CD8-positive, alpha-beta T cell (primary cell): ENCODE measurements at regions of chr19 and their contacts with region 1.

Region 1: GRCh38 chr19:15323496-15324227 is 8.7 kb downstream of the BRD4 start:
- DNase-seq: no peak
- ATAC-seq: no peak
- H3K4me3 ChIP-seq: no peak overlapping the region
- H3K4me3 Mint-ChIP-seq: peak overlapping the region; percentile 16
- H3K27ac ChIP-seq: peak overlapping the region in 1 of 2 experiments; percentile 28
- H3K27ac Mint-ChIP-seq: peak overlapping the region; percentile 7
- H3K4me1 ChIP-seq: peaks cover 84% of the 10 kb centered on the region
- H3K4me1 Mint-ChIP-seq: peaks cover 90% of the 10 kb centered on the region
- H3K27me3 ChIP-seq: no peaks in the 10 kb centered on the region
- H3K27me3 Mint-ChIP-seq: no peaks in the 10 kb centered on the region
- CTCF ChIP-seq: no peak

Region 2: GRCh38 chr19:15264061-15264932 is 59.4 kb before region 1 on chr19:
- CTCF ChIA-PET with region 1: interaction called, 4 read pairs
- POLR2A ChIA-PET with region 1: no interaction called
- intact Hi-C with region 1: loop called (anchors 2 kb)
- DNase-seq: peak; percentile 46 to 82 (median 72)
- ATAC-seq: peak; percentile 71
- H3K4me3 ChIP-seq: no peak overlapping the region
- H3K4me3 Mint-ChIP-seq: no peak overlapping the region
- H3K27ac ChIP-seq: no peak overlapping the region
- H3K27ac Mint-ChIP-seq: no peak overlapping the region
- H3K4me1 ChIP-seq: no peaks in the 10 kb centered on the region
- H3K4me1 Mint-ChIP-seq: peaks cover 3% of the 10 kb centered on the region
- H3K27me3 ChIP-seq: no peaks in the 10 kb centered on the region
- H3K27me3 Mint-ChIP-seq: no peaks in the 10 kb centered on the region
- CTCF ChIP-seq: peak; percentile 70

Region 3: GRCh38 chr19:15274477-15274876 is 49.2 kb before region 1 on chr19:
- CTCF ChIA-PET with region 1: no interaction called
- POLR2A ChIA-PET with region 1: no interaction called
- intact Hi-C with region 1: loop called in 1 of 2 experiments (anchors 2 kb)
- DNase-seq: no peak
- ATAC-seq: no peak
- H3K4me3 ChIP-seq: no peak overlapping the region
- H3K4me3 Mint-ChIP-seq: no peak overlapping the region
- H3K27ac ChIP-seq: no peak overlapping the region
- H3K27ac Mint-ChIP-seq: peak overlapping the region; percentile 69
- H3K4me1 ChIP-seq: peaks cover 50% of the 10 kb centered on the region
- H3K4me1 Mint-ChIP-seq: peaks cover 78% of the 10 kb centered on the region
- H3K27me3 ChIP-seq: no peaks in the 10 kb centered on the region
- H3K27me3 Mint-ChIP-seq: no peaks in the 10 kb centered on the region
- CTCF ChIP-seq: no peak

Region 4: DNA sequence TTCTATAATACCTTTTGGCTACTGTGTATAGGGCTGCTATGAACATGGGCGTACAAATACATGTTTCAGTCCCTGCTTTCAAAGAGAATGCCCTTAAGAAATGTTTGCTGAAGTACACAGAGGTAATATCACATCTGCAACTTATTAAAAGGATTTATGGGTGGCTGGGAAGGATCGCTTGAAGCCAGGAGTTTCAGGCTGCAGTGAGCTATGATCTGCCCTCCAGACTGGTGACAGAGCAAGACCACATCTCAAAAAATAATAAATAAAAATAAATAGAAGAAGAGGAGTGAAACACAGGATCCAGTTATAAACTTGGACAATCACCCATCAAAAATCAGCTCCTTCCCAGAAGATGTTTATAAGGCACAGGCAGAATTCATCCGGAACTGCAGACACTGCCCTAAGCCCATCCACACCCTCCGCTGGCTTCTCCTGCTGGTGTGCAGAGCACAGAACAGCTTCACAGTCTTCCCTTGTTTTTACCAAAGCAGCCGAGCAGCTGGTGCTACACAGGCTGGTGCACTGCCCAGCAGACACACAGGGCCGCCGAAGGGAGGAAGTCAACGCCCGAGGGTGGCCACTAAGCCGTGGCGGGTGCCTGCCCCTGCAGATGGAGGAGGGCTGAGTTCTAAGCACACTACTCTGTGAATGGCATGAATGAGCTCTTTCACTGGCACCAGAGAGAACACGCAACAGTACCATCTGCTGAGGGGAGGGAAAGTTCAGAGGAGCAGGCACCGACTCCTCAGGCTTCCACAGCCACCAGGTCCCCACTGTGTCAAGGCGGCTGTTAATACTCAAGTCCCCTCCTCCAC is 35.3 kb before region 1 on chr19:
- CTCF ChIA-PET with region 1: no interaction called
- POLR2A ChIA-PET with region 1: interaction called, 3 read pairs
- intact Hi-C with region 1: loop called in 1 of 2 experiments (anchors 5 kb)
- DNase-seq: peak in 1 of 9 experiments; percentile 32
- ATAC-seq: no peak
- H3K4me3 ChIP-seq: peak overlapping the region in 1 of 2 experiments; percentile 6
- H3K4me3 Mint-ChIP-seq: peak overlapping the region; percentile 38
- H3K27ac ChIP-seq: no peak overlapping the region
- H3K27ac Mint-ChIP-seq: peak overlapping the region; percentile 55
- H3K4me1 ChIP-seq: peaks cover 95% of the 10 kb centered on the region
- H3K4me1 Mint-ChIP-seq: peaks cover 96% of the 10 kb centered on the region
- H3K27me3 ChIP-seq: no peaks in the 10 kb centered on the region
- H3K27me3 Mint-ChIP-seq: no peaks in the 10 kb centered on the region
- CTCF ChIP-seq: no peak